ENCODE measurements at regions of chr6 and their contacts with region 1.

Region 1: GRCh38 chr6:123715006-123715875 is 78.5 kb upstream of the TRDN start:
- DNase-seq: no peak
- ATAC-seq: no peak
- H3K4me3 Mint-ChIP-seq: no peak overlapping the region
- H3K27ac Mint-ChIP-seq: no peak overlapping the region
- H3K4me1 Mint-ChIP-seq: no peaks in the 10 kb centered on the region
- H3K27me3 Mint-ChIP-seq: no peaks in the 10 kb centered on the region
- CTCF ChIP-seq: peak; percentile 52

Region 2: DNA sequence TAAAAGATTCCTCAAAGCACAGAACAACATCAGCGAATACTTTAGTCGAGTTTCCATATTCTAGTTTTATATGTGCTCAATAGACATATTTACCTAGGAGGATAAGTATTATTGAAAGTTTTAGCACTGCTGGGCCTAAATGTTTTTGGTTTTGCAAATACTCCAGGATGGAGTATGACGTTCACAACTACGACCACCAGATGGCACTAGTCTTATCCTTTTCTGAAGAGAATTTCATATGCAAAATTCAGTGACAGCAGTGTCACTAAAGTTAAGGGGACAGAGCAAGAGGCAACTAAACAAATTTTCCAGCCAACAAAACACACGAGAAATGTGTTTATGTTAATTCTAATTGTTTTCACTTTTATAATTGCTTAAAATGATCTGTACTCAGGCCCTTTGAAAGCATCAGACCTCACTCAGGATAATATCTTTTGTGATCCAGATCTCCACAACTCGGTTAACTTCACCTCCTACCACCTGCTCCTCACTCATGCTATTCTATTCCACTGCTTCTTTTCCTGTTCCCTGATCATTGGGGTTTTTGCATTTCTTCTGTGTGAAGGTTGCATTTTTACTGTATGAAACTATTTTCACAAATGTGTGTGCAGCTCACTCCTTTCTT is 299.3 kb before region 1 on chr6:
- CTCF ChIA-PET with region 1: interaction called, 8 read pairs
- POLR2A ChIA-PET with region 1: no interaction called
- intact Hi-C with region 1: loop called (anchors 5 kb)
- DNase-seq: peak; percentile 68
- ATAC-seq: no peak
- H3K4me3 Mint-ChIP-seq: no peak overlapping the region
- H3K27ac Mint-ChIP-seq: no peak overlapping the region
- H3K4me1 Mint-ChIP-seq: no peaks in the 10 kb centered on the region
- H3K27me3 Mint-ChIP-seq: no peaks in the 10 kb centered on the region
- CTCF ChIP-seq: peak; percentile 66

Region 3: GRCh38 chr6:123742626-123743025 is 27.4 kb after region 1 on chr6:
- CTCF ChIA-PET with region 1: no interaction called
- POLR2A ChIA-PET with region 1: no interaction called
- intact Hi-C with region 1: no loop called
- DNase-seq: no peak
- ATAC-seq: no peak
- H3K4me3 Mint-ChIP-seq: no peak overlapping the region
- H3K27ac Mint-ChIP-seq: no peak overlapping the region
- H3K4me1 Mint-ChIP-seq: no peaks in the 10 kb centered on the region
- H3K27me3 Mint-ChIP-seq: no peaks in the 10 kb centered on the region
- CTCF ChIP-seq: no peak

Measured in activated CD8-positive, alpha-beta T cell treated with anti-CD3 and anti-CD28 coated beads for 36 hours (primary cell).